ENCODE measurements at regions of chr6 and their contacts with region 1.

Region 1: GRCh38 chr6:3650959-3651697 is 100.4 kb downstream of the PXDC1 start:
- DNase-seq: no peak
- H3K4me3 ChIP-seq: no peak overlapping the region
- CTCF ChIP-seq: no peak
- POLR2A ChIP-seq: no peak

Region 2: GRCh38 chr6:3534599-3534998 is 116.5 kb before region 1 on chr6:
- intact Hi-C with region 1: loop called (anchors 10 kb)
- DNase-seq: no peak
- H3K4me3 ChIP-seq: no peak overlapping the region
- CTCF ChIP-seq: no peak
- POLR2A ChIP-seq: no peak